Keratinocyte (primary cell): ENCODE measurements at regions of chr6 and their contacts with region 1.

Region 1: DNA sequence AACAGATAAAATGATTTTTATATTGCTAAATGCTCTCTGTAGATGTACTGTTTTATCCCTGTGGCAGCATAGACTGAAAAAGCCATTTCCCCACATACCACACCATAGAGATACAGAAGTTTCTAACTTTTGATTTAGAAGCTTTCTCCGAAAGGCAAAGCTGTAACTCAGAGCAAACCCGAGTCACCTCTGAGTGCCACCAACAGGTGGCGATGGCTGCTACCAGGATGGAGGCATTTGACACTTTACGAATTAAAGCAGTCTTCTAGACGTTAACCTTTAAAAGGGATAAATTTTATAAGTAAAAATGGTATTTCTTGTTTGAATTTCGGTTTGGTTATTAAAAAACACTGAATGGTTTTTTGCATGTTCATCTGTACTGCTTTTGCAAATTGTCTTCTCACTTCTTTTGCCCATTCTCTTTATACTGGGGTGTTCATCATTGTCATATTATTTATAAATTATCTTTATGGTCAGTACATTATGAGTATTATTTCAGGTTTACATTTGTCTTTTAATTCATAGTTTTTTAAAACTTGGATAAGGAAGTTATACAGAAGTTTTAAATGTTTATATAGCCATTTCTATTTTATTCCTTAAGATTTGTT is 201.0 kb upstream of the CEP162 start:
- DNase-seq: no peak
- H3K4me3 ChIP-seq: no peak overlapping the region
- H3K27ac ChIP-seq: no peak overlapping the region
- H3K4me1 ChIP-seq: no peaks in the 10 kb centered on the region
- H3K27me3 ChIP-seq: no peaks in the 10 kb centered on the region
- CTCF ChIP-seq: peak; percentile 64 to 75 (median 71)

Region 2: GRCh38 chr6:84526631-84527030 is 98.2 kb after region 1 on chr6:
- dilution Hi-C with region 1: no loop called
- DNase-seq: no peak
- H3K4me3 ChIP-seq: no peak overlapping the region
- H3K27ac ChIP-seq: no peak overlapping the region
- H3K4me1 ChIP-seq: no peaks in the 10 kb centered on the region
- H3K27me3 ChIP-seq: no peaks in the 10 kb centered on the region
- CTCF ChIP-seq: no peak

Region 3: GRCh38 chr6:85323435-85324040 is 895.1 kb after region 1 on chr6:
- dilution Hi-C with region 1: loop called (anchors 25 kb)
- DNase-seq: peak; percentile 35
- H3K4me3 ChIP-seq: no peak overlapping the region
- H3K27ac ChIP-seq: no peak overlapping the region
- H3K4me1 ChIP-seq: no peaks in the 10 kb centered on the region
- H3K27me3 ChIP-seq: no peaks in the 10 kb centered on the region
- CTCF ChIP-seq: peak; percentile 78 to 85 (median 82)